ENCODE measurements at regions of chr18 and their contacts with region 1.

Region 1: DNA sequence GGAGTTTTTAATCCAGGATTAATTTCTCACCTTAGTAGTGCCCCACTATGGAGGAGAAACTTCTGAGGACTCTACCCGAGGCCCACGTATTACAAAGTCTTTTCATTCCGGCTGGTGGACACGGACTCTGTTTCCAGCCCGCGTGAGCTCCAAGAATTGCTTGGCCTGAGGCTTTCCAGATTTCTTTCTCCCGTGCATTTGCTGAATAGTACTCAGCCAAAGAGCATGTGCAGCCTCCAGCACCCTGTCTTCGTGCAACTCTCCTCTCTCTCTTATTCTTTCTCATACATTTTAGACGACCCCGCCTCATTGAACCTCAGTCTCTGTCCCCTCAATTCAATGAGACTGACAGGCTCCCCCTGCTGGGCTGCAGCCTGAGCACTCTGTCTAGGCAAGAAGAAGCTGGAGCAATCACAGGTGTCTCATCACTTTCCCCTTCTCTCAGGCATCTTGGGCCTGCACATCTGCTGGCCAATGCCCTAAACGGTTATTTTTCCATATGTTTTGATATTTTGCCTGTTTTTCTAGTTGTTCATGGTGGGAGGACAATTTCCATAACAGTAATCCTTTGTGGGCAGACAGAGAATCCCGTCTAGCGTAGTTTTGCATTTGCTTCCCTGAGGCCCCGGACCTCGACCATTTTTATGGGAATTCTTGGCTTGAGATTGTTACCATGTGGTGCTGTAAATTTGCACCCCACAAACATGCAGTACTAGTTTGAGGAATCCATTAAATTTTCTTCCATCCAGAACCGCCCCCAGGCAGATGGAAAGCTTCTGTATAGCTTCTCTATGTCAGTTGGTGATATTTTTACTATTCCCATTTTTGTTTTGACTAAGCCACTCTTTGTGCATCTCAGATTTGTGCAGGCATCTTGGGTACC is 50.1 kb upstream of the LPIN2 start:
- DNase-seq: peak; percentile 74 to 88 (median 83)
- ATAC-seq: peak; percentile 67
- H3K4me3 ChIP-seq: no peak overlapping the region
- H3K4me1 ChIP-seq: peaks cover 5% of the 10 kb centered on the region
- CTCF ChIP-seq: peak; percentile 59

Region 2: DNA sequence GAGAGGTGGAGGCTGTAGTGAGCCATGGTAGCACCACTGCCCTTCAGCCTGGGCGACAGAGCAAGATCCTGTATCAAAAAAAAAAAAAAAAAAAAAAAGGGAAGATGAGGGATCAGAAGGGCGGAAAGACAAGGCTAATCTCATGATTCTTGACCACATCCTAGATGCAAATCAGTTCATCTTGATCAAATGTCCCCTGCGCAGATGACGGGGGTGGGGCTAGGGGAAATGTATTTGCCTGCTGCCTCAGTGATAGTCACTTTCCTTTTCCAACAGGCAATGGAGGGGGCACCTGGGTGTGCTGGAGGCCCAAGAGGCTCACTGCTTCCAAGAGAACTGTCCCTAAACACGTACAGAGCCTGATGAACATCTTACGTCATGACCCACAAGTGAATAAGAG is 219.9 kb before region 1 on chr18:
- intact Hi-C with region 1: no loop called
- DNase-seq: peak in 1 of 3 donors; percentile 11
- ATAC-seq: no peak
- H3K4me3 ChIP-seq: no peak overlapping the region
- H3K4me1 ChIP-seq: peaks cover 19% of the 10 kb centered on the region
- CTCF ChIP-seq: no peak

Region 3: DNA sequence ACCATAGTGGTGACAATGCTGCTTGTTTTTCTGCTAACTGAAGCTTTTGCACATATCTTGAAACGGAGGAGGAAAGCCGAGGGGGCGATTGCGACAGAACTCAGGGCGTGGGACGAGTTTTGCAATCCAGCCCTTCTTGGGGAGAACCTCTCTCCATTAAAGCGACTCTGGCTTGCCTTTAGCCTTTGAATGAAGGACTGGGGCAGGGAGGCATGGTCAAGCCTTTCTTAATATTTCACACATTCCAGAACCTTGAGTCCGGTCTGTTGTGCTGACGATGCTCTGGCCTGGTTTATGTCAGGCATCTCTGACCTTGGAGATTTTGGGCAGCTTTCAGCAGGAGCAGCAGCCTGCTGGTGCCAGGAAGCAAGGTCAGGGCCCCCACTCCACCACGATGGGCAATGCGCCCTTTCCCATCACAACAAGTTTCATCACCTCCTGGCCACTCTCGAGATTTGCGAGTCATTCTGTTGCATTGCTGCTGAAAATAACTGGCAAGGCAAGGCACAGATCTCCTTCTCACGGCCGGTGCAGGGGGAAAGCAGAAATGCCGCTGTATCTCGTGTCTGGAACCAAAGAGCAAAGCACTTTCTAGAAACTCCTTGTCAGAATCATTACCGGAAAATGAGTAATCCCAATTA is 205.4 kb before region 1 on chr18:
- intact Hi-C with region 1: no loop called
- DNase-seq: peak; percentile 52 to 72 (median 54)
- ATAC-seq: peak; percentile 57
- H3K4me3 ChIP-seq: no peak overlapping the region
- H3K4me1 ChIP-seq: no peaks in the 10 kb centered on the region
- CTCF ChIP-seq: no peak

Region 4: DNA sequence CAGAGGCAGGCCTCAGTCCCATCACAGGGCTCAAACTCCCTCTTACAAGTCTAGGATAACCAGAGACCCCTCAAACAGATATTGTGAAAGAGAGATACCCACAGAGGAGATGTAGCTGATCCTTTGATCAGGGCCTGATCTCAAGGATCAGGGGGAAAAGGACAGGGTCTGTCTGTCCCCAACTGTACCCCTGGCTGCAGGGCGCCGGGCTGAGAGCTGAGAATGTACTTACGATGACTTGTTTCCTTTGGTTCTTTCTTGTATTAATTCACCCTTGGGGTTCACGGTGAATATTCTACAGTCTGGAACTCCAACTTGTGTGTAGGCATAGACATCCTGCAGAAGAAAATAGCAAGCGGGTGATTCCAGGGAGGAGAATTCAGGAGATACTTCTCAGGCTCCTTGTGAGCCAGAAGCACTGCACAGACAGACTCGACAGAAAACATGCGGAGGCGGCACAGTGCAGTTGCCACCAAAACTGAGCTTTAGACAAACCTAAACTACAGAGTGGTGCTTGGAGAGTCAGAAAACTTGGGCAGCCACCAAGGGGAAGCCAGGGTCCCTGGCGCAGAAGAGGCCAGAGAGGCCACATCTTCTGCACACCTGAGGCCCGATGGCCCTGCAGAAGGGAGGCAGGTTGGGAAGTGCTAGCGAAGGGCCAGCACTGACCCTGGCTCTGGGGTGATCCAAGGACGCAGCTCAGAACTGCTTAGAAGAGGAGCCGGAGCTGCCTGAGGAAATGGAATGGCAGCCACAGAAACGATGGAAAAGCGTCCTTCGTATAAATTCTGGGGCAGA is 142.3 kb before region 1 on chr18:
- intact Hi-C with region 1: loop called in 1 of 2 experiments (anchors 10 kb)
- DNase-seq: no peak
- ATAC-seq: no peak
- H3K4me3 ChIP-seq: no peak overlapping the region
- H3K4me1 ChIP-seq: peaks cover 13% of the 10 kb centered on the region
- CTCF ChIP-seq: no peak

Measured in mucosa of descending colon (tissue), 3 donors.